ENCODE measurements at regions of chr2 and their contacts with region 1.

Region 1: GRCh38 chr2:241149925-241150659 is at the start of gene PPP1R7:
- DNase-seq: peak; percentile 94 to 97
- H3K4me3 ChIP-seq: peak within 1 kb of the TSS; percentile 76
- H3K27ac ChIP-seq: no peak within 1 kb of the TSS
- H3K4me1 ChIP-seq: peaks cover 17% of the 10 kb centered on the region
- H3K27me3 ChIP-seq: no peaks in the 10 kb centered on the region
- CTCF ChIP-seq: no peak
- total RNA-seq, gene PPP1R7: 113 and 143 TPM in 2 replicates

Region 2: GRCh38 chr2:241102239-241102803 is 47.8 kb before region 1 on chr2 and contains the start of gene MTERF4:
- CTCF ChIA-PET with region 1: no interaction called
- POLR2A ChIA-PET with region 1: no interaction called
- intact Hi-C with region 1: loop called (anchors 5 kb)
- DNase-seq: peak; percentile 84 to 96
- H3K4me3 ChIP-seq: peak within 1 kb of the TSS; percentile 83
- H3K27ac ChIP-seq: peak within 1 kb of the TSS; percentile 66
- H3K4me1 ChIP-seq: peaks cover 10% of the 10 kb centered on the region
- H3K27me3 ChIP-seq: no peaks in the 10 kb centered on the region
- CTCF ChIP-seq: no peak
- total RNA-seq, gene MTERF4: 38.6 and 42.8 TPM in 2 replicates

Region 3: GRCh38 chr2:241184901-241185300 is 34.8 kb after region 1 on chr2:
- CTCF ChIA-PET with region 1: no interaction called
- POLR2A ChIA-PET with region 1: interaction called, 15 read pairs
- intact Hi-C with region 1: no loop called
- DNase-seq: peak in 1 of 2 experiments; percentile 22
- H3K4me3 ChIP-seq: no peak overlapping the region
- H3K27ac ChIP-seq: no peak overlapping the region
- H3K4me1 ChIP-seq: no peaks in the 10 kb centered on the region
- H3K27me3 ChIP-seq: peaks cover 21% of the 10 kb centered on the region
- CTCF ChIP-seq: no peak

Measured in PC-9 (cell line).